B cell (primary cell): ENCODE measurements at regions of chr9 and their contacts with region 1.

Region 1: DNA sequence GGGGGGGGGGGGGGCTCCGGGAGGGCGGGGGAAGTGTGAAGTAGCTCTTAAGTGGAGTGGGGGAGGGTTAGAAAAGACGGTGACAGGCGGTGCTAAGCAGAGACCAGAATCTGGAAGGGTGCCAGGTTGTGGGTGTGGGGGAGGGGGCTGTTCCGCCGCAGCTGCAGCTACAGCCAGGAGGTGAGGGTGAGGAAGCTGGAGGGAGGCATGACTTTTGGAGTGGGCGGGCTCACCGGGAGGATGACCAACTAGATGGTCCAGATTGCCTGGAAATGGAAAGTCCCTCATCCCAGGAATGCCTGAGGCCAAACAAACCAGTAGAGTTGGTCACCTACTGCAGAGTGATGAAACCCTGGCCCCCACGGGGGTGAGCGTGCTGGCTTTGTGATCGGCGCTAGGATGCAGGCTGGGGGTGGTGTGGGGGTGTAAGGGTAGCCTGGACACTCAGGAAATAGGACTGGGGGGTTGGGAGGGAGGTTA is 158.1 kb upstream of the SHB start:
- DNase-seq: peak; percentile 37
- ATAC-seq: peak; percentile 33
- H3K4me3 ChIP-seq: no peak overlapping the region
- H3K4me3 Mint-ChIP-seq: no peak overlapping the region
- H3K27ac ChIP-seq: no peak overlapping the region
- H3K27ac Mint-ChIP-seq: no peak overlapping the region
- H3K4me1 ChIP-seq: peaks cover 3 to 11% of the 10 kb centered on the region in 2 donors
- H3K4me1 Mint-ChIP-seq: peaks cover 13% of the 10 kb centered on the region
- H3K27me3 ChIP-seq: peaks cover 0 to 12% (median 1%) of the 10 kb centered on the region in 4 experiments
- H3K27me3 Mint-ChIP-seq: peaks cover 51% of the 10 kb centered on the region
- CTCF ChIP-seq: no peak

Region 2: GRCh38 chr9:38178237-38178636 is 48.9 kb before region 1 on chr9:
- CTCF ChIA-PET with region 1: no interaction called
- POLR2A ChIA-PET with region 1: no interaction called
- intact Hi-C with region 1: loop called (anchors 10 kb)
- DNase-seq: no peak
- ATAC-seq: no peak
- H3K4me3 ChIP-seq: no peak overlapping the region
- H3K4me3 Mint-ChIP-seq: no peak overlapping the region
- H3K27ac ChIP-seq: no peak overlapping the region
- H3K27ac Mint-ChIP-seq: no peak overlapping the region
- H3K4me1 ChIP-seq: no peaks in the 10 kb centered on the region
- H3K4me1 Mint-ChIP-seq: no peaks in the 10 kb centered on the region
- H3K27me3 ChIP-seq: no peaks in the 10 kb centered on the region
- H3K27me3 Mint-ChIP-seq: peaks cover 16% of the 10 kb centered on the region
- CTCF ChIP-seq: no peak